ENCODE measurements at regions of chr7 and their contacts with region 1.

Region 1: GRCh38 chr7:101856473-101857357 is 39.3 kb downstream of the CUX1 start:
- DNase-seq: peak; percentile 93
- ATAC-seq: peak; percentile 86
- H3K4me3 ChIP-seq: peak overlapping the region; percentile 50 to 68 (median 61)
- H3K4me3 Mint-ChIP-seq: peak overlapping the region; percentile 96
- H3K27ac ChIP-seq: peak overlapping the region; percentile 95 to 97
- H3K27ac Mint-ChIP-seq: peak overlapping the region; percentile 99
- H3K4me1 ChIP-seq: peaks cover 32 to 53% of the 10 kb centered on the region in 2 donors
- H3K4me1 Mint-ChIP-seq: peaks cover 68% of the 10 kb centered on the region
- H3K27me3 ChIP-seq: no peaks in the 10 kb centered on the region
- H3K27me3 Mint-ChIP-seq: no peaks in the 10 kb centered on the region
- CTCF ChIP-seq: peak; percentile 69

Region 2: DNA sequence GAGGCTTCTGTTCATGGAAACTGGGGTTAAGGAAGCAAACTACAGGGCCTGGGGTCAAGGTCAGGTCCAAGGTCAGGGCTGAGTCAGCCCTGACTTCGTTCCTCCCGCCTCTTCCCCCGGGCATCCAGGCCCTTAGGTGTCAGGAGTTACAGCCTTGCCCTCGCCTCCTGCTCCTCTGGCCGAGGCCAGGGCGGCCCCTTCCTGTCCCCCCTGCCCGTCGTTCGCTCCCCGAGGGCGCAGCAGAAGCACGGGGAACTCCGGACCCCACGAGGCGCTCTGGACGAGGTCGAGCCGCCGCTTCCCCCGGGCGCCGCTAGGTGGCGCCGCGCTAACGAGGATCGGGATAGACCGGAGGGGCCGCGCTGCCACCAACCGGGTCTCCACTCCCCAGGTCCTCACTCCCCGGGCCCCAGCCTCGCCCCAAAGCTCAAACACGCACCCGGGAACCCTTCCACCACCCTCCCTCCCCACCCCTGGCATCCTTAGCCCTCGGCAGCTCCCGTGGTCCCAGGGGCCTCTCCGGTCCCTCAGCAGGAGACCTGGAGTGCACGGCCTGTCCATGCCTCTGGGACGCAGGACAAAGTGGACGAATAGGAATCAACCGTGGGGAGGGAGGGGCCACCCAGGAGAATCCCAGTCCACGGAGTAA is 168.4 kb before region 1 on chr7:
- CTCF ChIA-PET with region 1: no interaction called
- POLR2A ChIA-PET with region 1: no interaction called
- intact Hi-C with region 1: loop called (anchors 5 kb)
- DNase-seq: peak; percentile 87
- ATAC-seq: peak; percentile 91
- H3K4me3 ChIP-seq: peak overlapping the region in 1 of 5 experiments; percentile 15
- H3K4me3 Mint-ChIP-seq: no peak overlapping the region
- H3K27ac ChIP-seq: no peak overlapping the region
- H3K27ac Mint-ChIP-seq: no peak overlapping the region
- H3K4me1 ChIP-seq: peaks cover 3 to 7% of the 10 kb centered on the region in 2 donors
- H3K4me1 Mint-ChIP-seq: peaks cover 2% of the 10 kb centered on the region
- H3K27me3 ChIP-seq: peaks cover 0 to 12% (median 1%) of the 10 kb centered on the region in 4 experiments
- H3K27me3 Mint-ChIP-seq: peaks cover 5% of the 10 kb centered on the region
- CTCF ChIP-seq: peak; percentile 93

Region 3: GRCh38 chr7:101702362-101702850 is 154.3 kb before region 1 on chr7:
- CTCF ChIA-PET with region 1: no interaction called
- POLR2A ChIA-PET with region 1: no interaction called
- intact Hi-C with region 1: no loop called
- DNase-seq: no peak
- ATAC-seq: no peak
- H3K4me3 ChIP-seq: no peak overlapping the region
- H3K4me3 Mint-ChIP-seq: no peak overlapping the region
- H3K27ac ChIP-seq: no peak overlapping the region
- H3K27ac Mint-ChIP-seq: no peak overlapping the region
- H3K4me1 ChIP-seq: no peaks in the 10 kb centered on the region
- H3K4me1 Mint-ChIP-seq: no peaks in the 10 kb centered on the region
- H3K27me3 ChIP-seq: no peaks in the 10 kb centered on the region
- H3K27me3 Mint-ChIP-seq: peaks cover 3% of the 10 kb centered on the region
- CTCF ChIP-seq: no peak

Region 4: DNA sequence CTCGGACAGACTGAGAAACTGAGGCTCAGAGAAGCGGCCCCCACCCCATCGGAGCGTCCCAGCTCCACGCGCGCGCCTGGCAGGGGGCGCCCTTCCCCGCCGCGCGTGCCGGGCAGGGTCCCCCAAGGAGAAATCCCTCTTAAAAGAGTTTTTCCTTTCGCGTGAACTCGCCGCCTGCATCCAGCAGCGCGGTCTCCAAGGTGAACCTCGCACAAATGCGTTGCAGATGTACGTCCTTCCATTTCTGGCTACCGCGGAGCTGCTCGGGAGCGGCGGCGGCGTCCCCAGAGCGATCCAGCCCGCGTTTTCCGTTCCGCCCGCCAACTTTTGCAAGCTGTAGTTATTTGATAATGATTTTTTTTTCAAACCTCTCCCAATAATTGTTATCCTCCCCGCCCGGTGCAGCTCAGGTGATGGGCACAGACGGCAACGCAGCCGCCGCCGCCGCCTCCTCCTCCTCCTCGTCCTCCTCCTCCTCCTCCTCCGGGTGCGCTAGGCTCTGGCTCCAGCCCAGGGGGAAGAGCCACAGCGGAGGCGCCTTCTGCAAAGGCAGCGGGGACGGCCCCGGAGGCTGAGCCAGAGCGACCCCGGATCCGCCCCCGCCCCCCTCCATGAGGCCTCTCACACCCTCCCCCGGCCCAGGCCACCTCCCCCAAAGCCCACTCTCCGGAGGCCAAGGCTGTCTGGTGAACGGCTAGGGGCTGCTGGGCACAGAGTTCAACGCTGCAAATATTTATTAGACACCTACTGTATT is 113.3 kb before region 1 on chr7:
- CTCF ChIA-PET with region 1: interaction called, 6 read pairs
- POLR2A ChIA-PET with region 1: no interaction called
- intact Hi-C with region 1: loop called (anchors 1 kb)
- DNase-seq: peak; percentile 78
- ATAC-seq: peak; percentile 44
- H3K4me3 ChIP-seq: peak overlapping the region; percentile 1 to 62 (median 57)
- H3K4me3 Mint-ChIP-seq: peak overlapping the region; percentile 83
- H3K27ac ChIP-seq: no peak overlapping the region
- H3K27ac Mint-ChIP-seq: peak overlapping the region; percentile 32
- H3K4me1 ChIP-seq: peaks cover 42 to 63% of the 10 kb centered on the region in 2 donors
- H3K4me1 Mint-ChIP-seq: peaks cover 51% of the 10 kb centered on the region
- H3K27me3 ChIP-seq: peaks cover 0 to 8% (median 0%) of the 10 kb centered on the region in 4 experiments
- H3K27me3 Mint-ChIP-seq: no peaks in the 10 kb centered on the region
- CTCF ChIP-seq: peak; percentile 67

Region 5: DNA sequence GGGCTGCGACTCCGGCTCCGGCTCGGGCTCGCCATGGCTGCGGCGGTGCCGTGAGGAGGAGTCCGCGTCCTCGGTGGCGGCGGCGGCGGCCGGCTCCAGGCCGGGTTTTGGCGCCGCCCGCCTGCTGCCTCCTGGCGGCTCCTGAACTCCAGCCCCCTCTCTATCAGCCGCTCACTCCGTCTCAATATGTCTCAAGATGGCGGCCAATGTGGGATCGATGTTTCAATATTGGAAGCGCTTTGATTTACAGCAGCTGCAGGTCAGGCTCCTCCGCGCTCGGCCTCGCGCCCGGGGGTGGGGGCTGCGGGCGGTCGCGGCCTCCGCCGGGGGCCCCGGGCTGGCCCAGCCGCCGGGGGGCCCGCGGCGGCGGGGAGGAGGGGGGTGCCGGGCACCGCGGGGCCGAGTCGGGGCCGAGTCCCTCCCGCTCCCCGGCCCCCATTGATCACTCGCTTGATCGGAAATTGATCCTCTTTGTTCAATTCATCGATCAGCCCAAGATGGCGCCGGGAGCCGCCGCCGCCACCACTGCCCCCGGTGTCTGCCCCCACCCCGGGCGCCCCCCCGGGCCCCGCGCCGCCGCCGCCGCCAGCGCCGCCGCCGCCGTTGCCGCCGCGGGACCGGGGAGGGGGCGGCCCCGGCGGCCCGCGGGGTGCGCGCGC is 40.8 kb before region 1 on chr7:
- CTCF ChIA-PET with region 1: interaction called, 13 read pairs
- POLR2A ChIA-PET with region 1: no interaction called
- intact Hi-C with region 1: loop called (anchors 1 kb)
- DNase-seq: peak; percentile 87
- ATAC-seq: peak; percentile 73
- H3K4me3 ChIP-seq: peak overlapping the region; percentile 49 to 73 (median 61)
- H3K4me3 Mint-ChIP-seq: peak overlapping the region; percentile 88
- H3K27ac ChIP-seq: peak overlapping the region in 1 of 2 donors; percentile 18
- H3K27ac Mint-ChIP-seq: peak overlapping the region; percentile 89
- H3K4me1 ChIP-seq: peaks cover 7 to 16% of the 10 kb centered on the region in 2 donors
- H3K4me1 Mint-ChIP-seq: peaks cover 28% of the 10 kb centered on the region
- H3K27me3 ChIP-seq: no peaks in the 10 kb centered on the region
- H3K27me3 Mint-ChIP-seq: no peaks in the 10 kb centered on the region
- CTCF ChIP-seq: no peak

Region 6: DNA sequence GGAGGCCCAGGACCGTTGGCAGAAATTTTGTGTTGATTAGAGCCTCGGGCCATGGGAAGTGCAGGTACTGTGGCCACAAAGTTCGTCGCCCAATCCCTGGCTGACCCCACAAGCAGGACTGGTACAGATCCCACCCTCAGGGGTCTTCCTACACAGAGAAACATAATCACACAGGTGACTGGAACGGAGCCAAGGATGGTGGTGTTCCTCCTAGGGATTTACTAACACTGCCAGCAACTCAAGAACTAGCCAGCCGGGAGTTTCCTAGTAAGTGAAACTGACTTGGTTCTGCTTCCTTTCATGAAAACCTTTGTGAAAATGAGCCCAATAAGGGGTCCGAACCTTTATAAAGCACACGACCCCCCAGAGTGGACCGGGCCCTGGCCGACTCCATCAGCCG is 33.6 kb before region 1 on chr7:
- CTCF ChIA-PET with region 1: interaction called, 13 read pairs
- POLR2A ChIA-PET with region 1: interaction called, 13 read pairs
- intact Hi-C with region 1: no loop called
- DNase-seq: no peak
- ATAC-seq: no peak
- H3K4me3 ChIP-seq: no peak overlapping the region
- H3K4me3 Mint-ChIP-seq: no peak overlapping the region
- H3K27ac ChIP-seq: no peak overlapping the region
- H3K27ac Mint-ChIP-seq: no peak overlapping the region
- H3K4me1 ChIP-seq: peaks cover 0 to 1% of the 10 kb centered on the region in 2 donors
- H3K4me1 Mint-ChIP-seq: peaks cover 29% of the 10 kb centered on the region
- H3K27me3 ChIP-seq: no peaks in the 10 kb centered on the region
- H3K27me3 Mint-ChIP-seq: no peaks in the 10 kb centered on the region
- CTCF ChIP-seq: no peak

Region 7: GRCh38 chr7:101990811-101991418 is 134.2 kb after region 1 on chr7:
- CTCF ChIA-PET with region 1: interaction called, 3 read pairs
- POLR2A ChIA-PET with region 1: interaction called, 4 read pairs
- intact Hi-C with region 1: loop called (anchors 5 kb)
- DNase-seq: peak; percentile 86
- ATAC-seq: peak; percentile 91
- H3K4me3 ChIP-seq: peak overlapping the region in 4 of 5 experiments; percentile 22 to 53 (median 36)
- H3K4me3 Mint-ChIP-seq: peak overlapping the region; percentile 67
- H3K27ac ChIP-seq: peak overlapping the region; percentile 68 to 77
- H3K27ac Mint-ChIP-seq: peak overlapping the region; percentile 72
- H3K4me1 ChIP-seq: peaks cover 41 to 81% of the 10 kb centered on the region in 2 donors
- H3K4me1 Mint-ChIP-seq: peaks cover 67% of the 10 kb centered on the region
- H3K27me3 ChIP-seq: no peaks in the 10 kb centered on the region
- H3K27me3 Mint-ChIP-seq: no peaks in the 10 kb centered on the region
- CTCF ChIP-seq: no peak

Region 8: DNA sequence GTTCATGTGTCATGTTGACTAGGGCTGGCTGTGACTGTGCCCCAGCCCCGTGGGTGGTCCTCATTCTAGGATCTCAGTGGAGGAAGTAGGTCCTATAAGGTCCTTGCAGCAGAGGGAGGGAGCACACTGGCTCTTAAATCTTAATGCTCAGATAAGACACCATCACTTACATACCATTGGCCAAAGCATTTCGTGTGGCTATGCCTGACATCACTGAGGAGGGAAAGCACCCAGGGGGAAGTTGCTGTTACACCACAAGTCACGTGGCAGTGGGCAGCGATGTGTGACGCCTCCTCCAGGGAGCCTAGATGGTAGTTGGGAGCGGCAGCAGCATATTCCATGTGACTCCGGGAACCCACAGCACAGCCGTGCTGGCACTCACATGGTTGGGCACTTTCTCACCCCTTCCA is 205.3 kb after region 1 on chr7:
- CTCF ChIA-PET with region 1: interaction called, 5 read pairs
- POLR2A ChIA-PET with region 1: no interaction called
- intact Hi-C with region 1: loop called (anchors 5 kb)
- DNase-seq: peak; percentile 83
- ATAC-seq: peak; percentile 93
- H3K4me3 ChIP-seq: no peak overlapping the region
- H3K4me3 Mint-ChIP-seq: peak overlapping the region; percentile 48
- H3K27ac ChIP-seq: no peak overlapping the region
- H3K27ac Mint-ChIP-seq: peak overlapping the region; percentile 88
- H3K4me1 ChIP-seq: peaks cover 11 to 16% of the 10 kb centered on the region in 2 donors
- H3K4me1 Mint-ChIP-seq: peaks cover 30% of the 10 kb centered on the region
- H3K27me3 ChIP-seq: no peaks in the 10 kb centered on the region
- H3K27me3 Mint-ChIP-seq: no peaks in the 10 kb centered on the region
- CTCF ChIP-seq: no peak

Measured in B cell (primary cell).